CD4-positive, alpha-beta T cell (primary cell): ENCODE measurements at regions of chr11 and their contacts with region 1.

Region 1: GRCh38 chr11:126062679-126063506 is at the start of gene CDON:
- DNase-seq: peak; percentile 84 to 97 (median 90)
- ATAC-seq: peak; percentile 85
- H3K4me3 ChIP-seq: peak within 1 kb of the TSS; percentile 55
- H3K4me3 Mint-ChIP-seq: peak within 1 kb of the TSS; percentile 93
- H3K27ac ChIP-seq: peak within 1 kb of the TSS; percentile 55 to 84
- H3K27ac Mint-ChIP-seq: peak within 1 kb of the TSS; percentile 85
- H3K4me1 ChIP-seq: peaks cover 13% of the 10 kb centered on the region
- H3K4me1 Mint-ChIP-seq: peaks cover 16% of the 10 kb centered on the region
- H3K27me3 ChIP-seq: peaks cover 0 to 6% of the 10 kb centered on the region in 2 experiments
- H3K27me3 Mint-ChIP-seq: peaks cover 13% of the 10 kb centered on the region
- CTCF ChIP-seq: no peak
- total RNA-seq, gene CDON: 1.9 to 2.7 TPM

Region 2: GRCh38 chr11:125568970-125569914 is 493.7 kb before region 1 on chr11 and contains the start of gene EI24:
- CTCF ChIA-PET with region 1: no interaction called
- POLR2A ChIA-PET with region 1: no interaction called
- intact Hi-C with region 1: loop called in 1 of 2 experiments (anchors 2 kb)
- DNase-seq: peak; percentile 76 to 95 (median 86)
- ATAC-seq: peak; percentile 94
- H3K4me3 ChIP-seq: peak within 1 kb of the TSS; percentile 80
- H3K4me3 Mint-ChIP-seq: peak within 1 kb of the TSS; percentile 95
- H3K27ac ChIP-seq: peak within 1 kb of the TSS; percentile 68 to 74
- H3K27ac Mint-ChIP-seq: peak within 1 kb of the TSS; percentile 84
- H3K4me1 ChIP-seq: peaks cover 18% of the 10 kb centered on the region
- H3K4me1 Mint-ChIP-seq: peaks cover 26% of the 10 kb centered on the region
- H3K27me3 ChIP-seq: no peaks in the 10 kb centered on the region
- H3K27me3 Mint-ChIP-seq: no peaks in the 10 kb centered on the region
- CTCF ChIP-seq: peak; percentile 76
- total RNA-seq, gene EI24: 21.0 to 22.8 TPM

Region 3: GRCh38 chr11:125605417-125605816 is 457.5 kb before region 1 on chr11:
- CTCF ChIA-PET with region 1: no interaction called
- POLR2A ChIA-PET with region 1: no interaction called
- intact Hi-C with region 1: no loop called
- DNase-seq: no peak
- ATAC-seq: no peak
- H3K4me3 ChIP-seq: no peak overlapping the region
- H3K4me3 Mint-ChIP-seq: no peak overlapping the region
- H3K27ac ChIP-seq: no peak overlapping the region
- H3K27ac Mint-ChIP-seq: no peak overlapping the region
- H3K4me1 ChIP-seq: no peaks in the 10 kb centered on the region
- H3K4me1 Mint-ChIP-seq: no peaks in the 10 kb centered on the region
- H3K27me3 ChIP-seq: no peaks in the 10 kb centered on the region
- H3K27me3 Mint-ChIP-seq: no peaks in the 10 kb centered on the region
- CTCF ChIP-seq: no peak

Region 4: GRCh38 chr11:125887373-125888324 is 175.2 kb before region 1 on chr11 and contains the start of gene HYLS1:
- CTCF ChIA-PET with region 1: no interaction called
- POLR2A ChIA-PET with region 1: no interaction called
- intact Hi-C with region 1: loop called in 1 of 2 experiments (anchors 5 kb)
- DNase-seq: peak; percentile 87 to 98 (median 91)
- ATAC-seq: peak; percentile 88
- H3K4me3 ChIP-seq: peak within 1 kb of the TSS; percentile 63
- H3K4me3 Mint-ChIP-seq: peak within 1 kb of the TSS; percentile 95
- H3K27ac ChIP-seq: peak within 1 kb of the TSS; percentile 71 to 78
- H3K27ac Mint-ChIP-seq: peak within 1 kb of the TSS; percentile 92
- H3K4me1 ChIP-seq: peaks cover 20% of the 10 kb centered on the region
- H3K4me1 Mint-ChIP-seq: peaks cover 50% of the 10 kb centered on the region
- H3K27me3 ChIP-seq: no peaks in the 10 kb centered on the region
- H3K27me3 Mint-ChIP-seq: no peaks in the 10 kb centered on the region
- CTCF ChIP-seq: no peak
- total RNA-seq, gene HYLS1: 1.2 to 1.3 TPM

Region 5: DNA sequence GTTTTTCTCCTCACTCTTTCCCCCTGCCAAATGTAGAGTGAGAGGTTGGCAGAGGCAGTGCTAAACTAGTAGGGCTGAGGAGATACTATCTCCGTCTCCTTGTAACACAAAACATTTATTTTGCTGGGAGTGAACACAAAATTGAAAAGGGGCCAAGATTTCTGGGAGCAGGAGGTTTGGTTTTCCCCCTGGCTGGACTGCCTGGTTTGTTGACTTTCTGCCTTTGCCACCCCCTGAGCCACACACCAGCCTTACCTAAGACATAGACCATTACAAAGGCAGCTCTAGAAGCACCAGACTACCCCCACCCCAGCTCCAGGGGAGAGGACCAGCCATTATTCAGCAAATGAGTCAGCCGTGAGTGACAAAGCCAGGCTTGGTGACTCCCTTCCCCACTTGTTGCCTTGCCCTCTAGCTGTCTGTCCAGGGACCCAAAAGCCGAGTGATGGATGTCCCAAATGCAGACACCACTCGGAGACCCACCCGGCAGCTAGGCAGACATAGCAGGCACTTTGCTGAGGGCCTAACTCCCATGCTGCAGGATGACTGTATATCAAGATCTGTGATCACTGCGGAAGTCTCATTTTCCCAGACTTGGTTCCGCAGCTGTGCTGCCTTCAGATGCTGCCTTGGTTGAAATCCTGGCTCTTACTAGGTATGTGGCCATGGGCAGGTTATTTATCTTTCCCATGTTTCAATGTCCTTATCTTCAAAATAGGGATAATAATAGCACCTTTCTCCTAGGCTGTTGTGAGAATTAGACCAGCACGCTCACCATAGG is 17.5 kb after region 1 on chr11:
- CTCF ChIA-PET with region 1: no interaction called
- POLR2A ChIA-PET with region 1: interaction called, 20 read pairs
- intact Hi-C with region 1: no loop called
- DNase-seq: no peak
- ATAC-seq: no peak
- H3K4me3 ChIP-seq: no peak overlapping the region
- H3K4me3 Mint-ChIP-seq: no peak overlapping the region
- H3K27ac ChIP-seq: no peak overlapping the region
- H3K27ac Mint-ChIP-seq: no peak overlapping the region
- H3K4me1 ChIP-seq: peaks cover 26% of the 10 kb centered on the region
- H3K4me1 Mint-ChIP-seq: peaks cover 25% of the 10 kb centered on the region
- H3K27me3 ChIP-seq: no peaks in the 10 kb centered on the region
- H3K27me3 Mint-ChIP-seq: no peaks in the 10 kb centered on the region
- CTCF ChIP-seq: no peak